Right ventricle myocardium inferior (tissue), 1 donor: ENCODE measurements at regions of chr6 and their contacts with region 1.

Region 1: GRCh38 chr6:117188627-117189201 is 76.6 kb upstream of the VGLL2 start:
- DNase-seq: no peak
- ATAC-seq: no peak

Region 2: DNA sequence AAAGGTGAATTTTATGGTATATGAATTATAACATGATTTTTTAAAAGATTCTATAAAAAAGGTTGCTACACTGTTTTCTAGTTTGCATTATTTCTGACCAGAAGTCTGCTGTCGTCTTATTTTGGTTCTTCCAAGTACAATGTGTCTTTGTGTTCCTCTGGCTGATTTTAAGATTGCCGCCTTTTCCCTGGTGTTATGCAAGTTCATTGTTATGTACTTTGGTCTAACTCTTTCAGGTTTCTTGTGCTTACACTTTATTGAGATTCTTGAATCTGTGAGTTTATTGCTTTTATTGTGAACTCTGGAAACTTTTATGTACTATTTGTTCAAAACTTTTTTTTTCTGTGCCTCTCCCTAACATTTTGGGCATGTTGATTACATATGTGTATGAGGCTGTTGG is 201.9 kb before region 1 on chr6:
- intact Hi-C with region 1: loop called (anchors 5 kb)
- DNase-seq: no peak
- ATAC-seq: no peak

Region 3: GRCh38 chr6:117955684-117956256 is 767.1 kb after region 1 on chr6:
- intact Hi-C with region 1: no loop called
- DNase-seq: no peak
- ATAC-seq: no peak